GM10248 (cell line): ENCODE measurements at regions of chr2 and their contacts with region 1.

Region 1: GRCh38 chr2:235766278-235766677 is 272.4 kb downstream of the AGAP1 start:
- DNase-seq: peak; percentile 67
- CTCF ChIP-seq: peak; percentile 76

Region 2: GRCh38 chr2:235746257-235747084 is 19.8 kb before region 1 on chr2:
- CTCF ChIA-PET with region 1: interaction called, 19 read pairs
- POLR2A ChIA-PET with region 1: no interaction called
- DNase-seq: peak; percentile 73
- CTCF ChIP-seq: peak; percentile 89

Region 3: GRCh38 chr2:235754352-235755207 is 11.7 kb before region 1 on chr2:
- CTCF ChIA-PET with region 1: interaction called, 13 read pairs
- POLR2A ChIA-PET with region 1: no interaction called
- DNase-seq: no peak
- CTCF ChIP-seq: no peak

Region 4: DNA sequence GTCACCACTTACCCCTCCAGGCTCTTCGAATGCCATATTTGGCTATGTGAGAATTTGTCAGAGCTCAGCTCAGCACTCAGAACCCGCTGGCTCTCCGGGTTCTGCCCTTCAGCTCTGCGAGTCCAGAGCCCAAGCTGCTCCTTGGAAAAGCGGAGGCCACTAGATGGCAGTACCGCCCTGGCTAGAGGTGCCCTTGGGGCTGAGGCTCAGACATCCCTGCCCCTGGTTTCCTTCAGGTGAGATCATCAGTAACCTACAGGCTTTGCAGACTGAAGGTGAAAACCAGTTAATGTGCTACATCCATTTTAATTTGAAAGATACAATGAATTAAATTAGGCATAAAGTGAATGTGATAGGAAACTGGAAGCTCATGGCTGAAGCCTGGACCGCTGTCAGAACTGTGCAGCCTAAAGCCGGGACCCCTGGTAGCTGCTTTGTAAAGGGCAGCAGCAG is 13.2 kb after region 1 on chr2:
- CTCF ChIA-PET with region 1: interaction called, 10 read pairs
- POLR2A ChIA-PET with region 1: no interaction called
- DNase-seq: peak; percentile 67
- CTCF ChIP-seq: peak; percentile 89

Region 5: DNA sequence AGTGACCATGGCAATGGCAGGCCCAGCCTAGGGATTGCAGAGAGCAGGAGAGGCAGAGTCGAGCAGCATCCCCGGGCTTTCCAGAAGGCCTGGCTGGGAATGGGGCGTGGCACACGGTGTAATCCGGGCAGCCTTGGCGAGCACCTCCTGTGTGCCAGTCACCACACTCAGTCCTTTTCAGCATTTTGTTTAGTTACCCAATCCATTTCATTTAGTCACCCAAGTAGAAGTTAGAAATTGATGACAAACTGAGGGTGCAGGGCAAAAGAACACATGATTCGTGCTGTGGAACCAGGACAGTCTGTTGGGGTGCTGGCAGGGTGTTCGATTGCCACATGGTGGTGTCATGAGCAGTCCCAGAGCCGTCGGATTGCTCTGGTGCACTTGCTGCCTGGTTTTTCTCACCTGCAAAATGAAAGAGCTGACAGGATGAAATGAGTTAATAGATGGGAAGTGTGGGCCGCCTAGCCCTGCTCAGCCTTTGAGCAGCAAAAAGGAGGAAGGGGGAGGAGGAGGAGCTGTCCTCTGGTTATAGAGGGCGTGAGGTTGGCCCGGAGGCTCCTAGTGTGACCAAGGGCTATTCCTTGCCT is 27.0 kb after region 1 on chr2:
- CTCF ChIA-PET with region 1: interaction called, 18 read pairs
- POLR2A ChIA-PET with region 1: no interaction called
- DNase-seq: no peak
- CTCF ChIP-seq: peak; percentile 26

Region 6: DNA sequence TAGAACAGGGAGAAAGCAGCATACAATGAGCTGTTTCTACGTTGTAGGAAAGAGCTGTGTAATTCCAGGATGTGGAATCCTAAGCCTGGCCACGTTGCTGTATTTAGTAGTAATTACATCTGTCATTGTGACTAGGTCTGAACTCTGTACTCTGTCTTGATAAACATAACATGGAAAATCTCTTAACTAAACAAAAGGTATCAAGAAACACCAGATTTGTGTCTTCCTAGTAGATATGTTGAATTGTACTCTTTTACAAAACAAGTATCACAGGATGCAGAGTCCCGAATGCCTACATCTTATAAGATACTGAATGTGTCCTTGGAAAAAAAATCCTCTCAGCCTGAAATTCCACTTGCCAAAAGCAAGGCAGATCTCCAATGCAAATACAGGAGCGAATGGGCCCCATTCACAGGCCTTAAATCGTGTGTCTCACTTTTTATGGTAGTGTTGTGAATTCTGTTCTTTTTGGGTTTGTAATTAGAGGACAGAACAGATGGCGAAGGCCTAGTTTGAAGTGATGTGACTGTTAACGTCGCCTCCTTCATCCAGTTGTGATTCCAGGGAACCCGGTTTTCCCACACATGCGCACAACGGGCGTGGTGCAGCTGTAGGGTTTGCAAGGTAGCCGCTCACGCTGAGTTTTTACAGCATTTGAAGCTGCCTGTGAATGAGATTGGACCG is 155.4 kb after region 1 on chr2:
- CTCF ChIA-PET with region 1: no interaction called
- POLR2A ChIA-PET with region 1: no interaction called
- DNase-seq: no peak
- CTCF ChIP-seq: no peak

Region 7: GRCh38 chr2:236026841-236027240 is 260.6 kb after region 1 on chr2:
- CTCF ChIA-PET with region 1: no interaction called
- POLR2A ChIA-PET with region 1: no interaction called
- DNase-seq: no peak
- CTCF ChIP-seq: no peak

Region 8: GRCh38 chr2:236180831-236181453 is 414.7 kb after region 1 on chr2:
- CTCF ChIA-PET with region 1: interaction called, 19 read pairs
- POLR2A ChIA-PET with region 1: no interaction called
- DNase-seq: peak; percentile 61
- CTCF ChIP-seq: peak; percentile 59